ENCODE measurements at regions of chr12 and their contacts with region 1.

Region 1: DNA sequence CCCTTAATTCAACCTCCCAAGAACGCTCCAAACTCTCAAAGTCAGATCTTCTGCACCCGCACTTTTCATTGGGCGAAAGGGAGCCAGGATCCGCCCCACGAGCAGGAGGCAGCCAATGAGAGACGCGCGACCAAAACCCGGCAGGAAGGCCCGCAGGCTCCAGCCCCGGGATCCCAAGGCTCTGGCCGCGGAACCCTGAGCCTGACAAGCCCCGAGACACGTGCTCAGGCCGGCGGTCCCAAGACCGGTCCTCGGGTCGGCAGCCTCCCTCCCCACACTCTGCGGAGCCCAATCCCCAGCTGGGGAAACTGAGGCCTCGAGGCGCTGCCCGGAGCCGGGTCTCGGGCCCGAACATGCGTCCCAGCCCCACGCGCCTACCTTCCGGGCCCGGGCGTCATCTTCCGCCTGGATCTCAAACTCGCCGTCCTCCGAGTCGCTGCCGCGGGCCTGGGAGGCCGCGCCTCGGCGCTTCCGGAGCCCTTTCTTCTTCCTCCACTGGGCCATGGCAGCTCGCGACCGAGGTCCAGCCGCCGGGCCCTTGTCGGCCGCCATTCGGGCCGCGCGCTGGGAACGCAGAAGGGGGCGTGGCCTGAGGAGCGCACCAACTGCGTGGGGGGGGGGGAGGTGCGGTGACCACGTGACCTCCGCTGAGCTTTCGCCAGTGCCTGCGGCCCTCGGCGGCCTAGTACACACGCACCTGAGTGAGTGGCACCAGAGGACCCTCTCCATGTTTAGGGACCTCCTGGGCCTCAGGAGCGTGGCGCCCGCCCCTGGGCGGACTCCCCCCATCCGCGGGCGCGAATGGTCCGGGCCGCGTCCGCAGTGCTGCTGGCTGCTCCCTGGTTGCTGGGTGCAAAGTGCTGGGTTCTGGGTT is at the starts of genes DDX54 and RITA1:
- DNase-seq: peak; percentile 93
- H3K4me3 ChIP-seq: peak within 1 kb of the TSS; percentile 45 to 79 (median 76)
- H3K27ac ChIP-seq: peak within 1 kb of the TSS; percentile 67
- H3K4me1 ChIP-seq: peaks cover 12% of the 10 kb centered on the region
- H3K27me3 ChIP-seq: no peaks in the 10 kb centered on the region
- CTCF ChIP-seq: no peak
- POLR2A ChIP-seq: peak; percentile 91
- total RNA-seq, gene DDX54: 76.4 and 90.0 TPM in 2 replicates
- total RNA-seq, gene RITA1: 20.4 and 20.7 TPM in 2 replicates

Region 2: GRCh38 chr12:113161414-113162016 is 23.6 kb before region 1 on chr12:
- CTCF ChIA-PET with region 1: interaction called, 3 read pairs
- POLR2A ChIA-PET with region 1: interaction called, 5 read pairs
- dilution Hi-C with region 1: no loop called
- intact Hi-C with region 1: loop called (anchors 2 kb)
- DNase-seq: no peak
- H3K4me3 ChIP-seq: no peak overlapping the region
- H3K27ac ChIP-seq: no peak overlapping the region
- H3K4me1 ChIP-seq: no peaks in the 10 kb centered on the region
- H3K27me3 ChIP-seq: no peaks in the 10 kb centered on the region
- CTCF ChIP-seq: no peak
- POLR2A ChIP-seq: no peak

Measured in endothelial cell of umbilical vein (primary cell).